ENCODE measurements at regions of chr5 and their contacts with region 1.

Region 1: GRCh38 chr5:79020861-79021561 is 35.9 kb upstream of the ARSB start:
- DNase-seq: peak; percentile 58
- ATAC-seq: peak; percentile 28
- H3K4me3 ChIP-seq: no peak overlapping the region
- H3K4me3 Mint-ChIP-seq: peak overlapping the region; percentile 14
- H3K27ac ChIP-seq: no peak overlapping the region
- H3K27ac Mint-ChIP-seq: no peak overlapping the region
- H3K4me1 ChIP-seq: peaks cover 6 to 12% of the 10 kb centered on the region in 2 donors
- H3K4me1 Mint-ChIP-seq: peaks cover 8% of the 10 kb centered on the region
- H3K27me3 ChIP-seq: peaks cover 0 to 12% (median 10%) of the 10 kb centered on the region in 4 experiments
- H3K27me3 Mint-ChIP-seq: peaks cover 56% of the 10 kb centered on the region
- CTCF ChIP-seq: peak; percentile 78

Region 2: DNA sequence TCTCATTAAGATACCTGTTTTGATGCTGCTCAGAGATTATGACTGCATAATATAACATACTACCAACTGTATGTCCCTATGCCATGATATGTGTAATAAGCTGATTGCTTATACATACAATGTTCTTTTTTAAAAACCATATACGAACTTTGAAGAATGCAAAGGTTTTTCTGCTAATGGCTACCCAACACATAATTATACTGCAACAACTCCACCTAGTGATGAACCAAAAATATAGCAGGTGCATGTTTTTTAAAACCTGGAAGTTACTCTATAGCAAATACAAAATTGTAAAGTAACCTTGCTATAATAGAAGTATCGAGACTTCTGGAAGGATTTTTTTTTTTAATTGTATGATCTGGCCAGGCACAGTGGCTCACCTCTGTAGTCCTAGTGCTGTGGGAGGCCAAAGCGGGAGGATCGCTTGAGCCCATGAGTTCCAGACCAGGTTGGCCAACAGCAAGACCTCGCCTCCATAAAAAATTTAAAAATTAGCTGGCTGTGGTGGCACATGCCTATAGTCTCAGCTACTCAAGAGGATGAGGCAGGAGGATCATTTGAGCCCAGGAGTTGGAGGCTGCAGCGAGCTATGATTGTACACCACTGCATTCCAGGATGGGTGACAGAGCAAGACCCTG is 443.8 kb after region 1 on chr5:
- CTCF ChIA-PET with region 1: interaction called, 64 read pairs
- POLR2A ChIA-PET with region 1: no interaction called
- intact Hi-C with region 1: loop called (anchors 1 kb)
- DNase-seq: peak; percentile 27
- ATAC-seq: no peak
- H3K4me3 ChIP-seq: no peak overlapping the region
- H3K4me3 Mint-ChIP-seq: no peak overlapping the region
- H3K27ac ChIP-seq: no peak overlapping the region
- H3K27ac Mint-ChIP-seq: no peak overlapping the region
- H3K4me1 ChIP-seq: no peaks in the 10 kb centered on the region
- H3K4me1 Mint-ChIP-seq: peaks cover 2% of the 10 kb centered on the region
- H3K27me3 ChIP-seq: no peaks in the 10 kb centered on the region
- H3K27me3 Mint-ChIP-seq: peaks cover 3% of the 10 kb centered on the region
- CTCF ChIP-seq: peak; percentile 72

Region 3: DNA sequence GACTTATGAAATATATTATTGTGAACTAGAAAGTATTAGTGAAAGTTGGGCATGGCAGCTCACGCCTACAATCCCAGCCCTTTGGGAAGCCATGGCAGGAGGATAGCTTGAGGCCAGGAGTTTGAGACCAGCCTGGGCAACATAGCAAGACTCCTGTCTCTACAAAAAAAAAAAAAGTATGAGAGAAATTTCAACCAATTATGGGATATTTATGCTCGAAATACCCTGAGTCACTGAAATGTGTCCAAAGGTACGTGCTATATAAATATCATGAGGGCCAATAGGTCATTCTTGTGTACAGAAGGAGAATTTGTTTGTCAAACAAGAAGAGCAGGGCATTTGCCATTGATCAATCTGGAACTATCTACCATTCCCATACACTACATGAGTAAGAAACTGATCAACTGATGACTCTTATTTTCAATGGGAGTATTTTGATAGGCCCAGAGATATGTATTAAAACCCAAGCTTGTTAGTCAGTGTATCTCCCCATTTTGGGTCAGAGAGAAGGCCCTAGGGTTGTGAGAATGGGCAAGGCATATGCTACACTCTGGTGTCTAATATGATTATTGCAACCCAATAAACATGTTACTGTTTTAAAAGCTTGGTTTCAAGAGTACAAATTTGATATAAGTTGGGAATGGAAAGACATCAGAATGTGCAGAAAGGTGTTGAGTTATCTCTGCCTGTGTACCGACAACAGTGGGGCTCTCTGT is 514.6 kb after region 1 on chr5:
- CTCF ChIA-PET with region 1: no interaction called
- POLR2A ChIA-PET with region 1: no interaction called
- intact Hi-C with region 1: loop called (anchors 10 kb)
- DNase-seq: no peak
- ATAC-seq: no peak
- H3K4me3 ChIP-seq: no peak overlapping the region
- H3K4me3 Mint-ChIP-seq: no peak overlapping the region
- H3K27ac ChIP-seq: no peak overlapping the region
- H3K27ac Mint-ChIP-seq: no peak overlapping the region
- H3K4me1 ChIP-seq: no peaks in the 10 kb centered on the region
- H3K4me1 Mint-ChIP-seq: no peaks in the 10 kb centered on the region
- H3K27me3 ChIP-seq: peaks cover 0 to 5% (median 2%) of the 10 kb centered on the region in 4 experiments
- H3K27me3 Mint-ChIP-seq: peaks cover 16% of the 10 kb centered on the region
- CTCF ChIP-seq: no peak

Measured in B cell (primary cell).